AG04450 (cell line): ENCODE measurements at regions of chr21 and their contacts with region 1.

Region 1: DNA sequence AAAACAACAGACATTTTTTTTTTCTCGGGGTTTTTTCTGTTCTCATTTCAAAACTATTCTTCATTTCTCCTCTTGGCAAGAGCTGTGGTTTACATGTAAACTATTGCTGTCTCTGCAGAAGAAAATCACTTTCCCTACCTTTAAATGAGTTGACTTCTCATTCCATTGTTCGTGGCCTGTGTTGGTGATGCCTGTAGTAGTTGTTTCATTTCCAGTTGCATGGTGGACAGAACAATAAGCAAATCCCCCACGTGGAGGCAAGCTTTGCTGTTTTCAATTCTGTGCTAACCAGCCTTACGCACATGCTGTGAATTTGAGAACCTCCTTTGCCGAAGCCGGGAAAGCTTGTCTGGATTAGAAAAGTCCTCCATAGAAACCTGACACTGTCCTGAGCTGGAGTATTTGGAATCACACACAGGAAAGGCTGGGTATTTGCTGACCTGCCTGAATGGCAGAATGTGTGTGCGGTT is 26.2 kb upstream of the MAP3K7CL start:
- DNase-seq: no peak
- H3K4me3 ChIP-seq: no peak overlapping the region
- H3K27ac ChIP-seq: no peak overlapping the region
- H3K27me3 ChIP-seq: no peaks in the 10 kb centered on the region
- CTCF ChIP-seq: no peak

Region 2: DNA sequence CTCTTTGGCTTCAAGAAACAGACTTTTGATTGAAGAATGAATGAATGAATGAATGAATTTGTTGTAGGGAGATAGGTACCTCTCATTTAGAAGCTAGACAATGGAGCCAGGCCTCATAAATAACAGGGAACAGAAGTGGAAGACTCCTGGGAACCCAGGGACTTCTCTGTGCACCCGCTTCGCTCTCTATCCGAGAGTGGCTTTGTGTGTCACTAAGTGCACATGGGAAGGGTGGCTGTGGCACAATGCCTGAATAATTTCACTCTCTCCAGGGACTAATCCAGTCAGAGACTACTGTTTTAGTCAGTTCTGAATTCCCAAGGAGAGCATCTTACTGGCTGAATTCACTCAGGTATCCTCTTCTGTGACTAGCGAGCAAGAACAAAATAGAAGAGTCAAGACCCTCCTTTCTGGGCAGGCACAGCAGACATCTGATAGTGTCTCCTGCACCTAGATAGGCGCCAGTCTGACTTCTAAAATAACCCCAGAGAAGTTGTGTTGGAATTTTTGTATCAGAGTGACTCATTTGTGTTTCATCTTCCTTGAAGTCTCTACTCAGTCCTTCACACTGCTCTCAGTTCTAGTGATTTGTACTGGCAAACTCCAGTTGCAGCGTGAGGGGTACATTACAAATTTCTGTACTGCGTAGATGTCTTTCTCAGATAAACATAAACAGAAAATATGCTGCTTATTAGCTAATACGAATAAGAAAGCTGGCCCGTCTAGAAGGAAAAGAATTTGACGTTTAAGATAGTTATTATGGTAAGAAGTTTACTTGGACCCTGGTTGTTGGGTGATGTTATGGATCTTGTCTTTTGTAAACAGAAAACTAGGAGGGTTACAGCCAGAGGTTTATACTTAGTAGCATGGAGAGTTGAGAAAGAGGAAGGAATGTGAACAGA is 228.4 kb after region 1 on chr21:
- CTCF ChIA-PET with region 1: no interaction called
- POLR2A ChIA-PET with region 1: no interaction called
- DNase-seq: no peak
- H3K4me3 ChIP-seq: no peak overlapping the region
- H3K27ac ChIP-seq: peak overlapping the region; percentile 71
- H3K27me3 ChIP-seq: no peaks in the 10 kb centered on the region
- CTCF ChIP-seq: no peak

Region 3: GRCh38 chr21:31088315-31088714 is 1984.0 kb after region 1 on chr21:
- CTCF ChIA-PET with region 1: interaction called, 14 read pairs
- POLR2A ChIA-PET with region 1: no interaction called
- DNase-seq: no peak
- H3K4me3 ChIP-seq: no peak overlapping the region
- H3K27ac ChIP-seq: no peak overlapping the region
- H3K27me3 ChIP-seq: no peaks in the 10 kb centered on the region
- CTCF ChIP-seq: no peak